ENCODE measurements at regions of chr12 and their contacts with region 1.

Region 1: DNA sequence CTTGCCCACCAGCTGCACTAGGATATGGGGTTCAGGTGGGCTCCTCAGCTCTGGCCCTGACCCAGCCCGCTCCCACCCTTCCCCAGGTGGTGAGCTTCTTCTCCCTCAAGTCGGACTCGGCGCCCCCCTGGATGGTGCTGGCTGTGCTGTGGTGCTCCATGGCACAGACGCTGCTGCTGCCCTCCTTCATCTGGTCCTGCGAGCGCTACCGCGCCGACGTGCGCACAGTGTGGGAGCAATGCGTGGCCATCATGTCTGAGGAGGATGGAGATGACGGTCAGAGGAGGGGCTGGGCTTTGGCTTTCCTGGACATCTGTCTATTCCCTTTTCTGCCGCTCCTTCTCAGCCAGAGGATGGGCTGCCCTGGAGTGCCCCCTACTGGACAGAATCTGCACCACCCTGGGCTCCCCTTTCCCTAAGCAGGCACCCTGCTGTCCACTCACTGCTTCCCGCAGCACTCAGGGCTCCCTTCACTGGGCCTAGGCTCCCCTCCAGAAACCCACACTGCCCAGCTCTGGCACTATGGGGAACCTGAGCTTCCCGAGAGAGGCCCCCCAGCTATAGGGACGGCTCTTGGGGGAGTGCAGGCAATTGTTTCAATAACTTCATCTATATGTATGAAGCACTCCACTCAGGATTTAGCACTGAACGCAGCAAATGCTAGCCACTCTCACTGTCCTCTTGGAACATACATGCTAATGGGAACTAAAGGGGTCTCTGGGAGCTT is 2.6 kb upstream of the P3H3 start:
- DNase-seq: peak; percentile 75 to 84 (median 81)
- ATAC-seq: peak; percentile 79
- H3K4me3 ChIP-seq: no peak overlapping the region
- H3K27ac ChIP-seq: no peak overlapping the region
- H3K4me1 ChIP-seq: peaks cover 19 to 58% of the 10 kb centered on the region in 2 experiments; a peak in 4 of 5 replicates
- H3K27me3 ChIP-seq: peaks cover 0 to 4% of the 10 kb centered on the region in 2 experiments; a peak in 2 of 5 replicates
- CTCF ChIP-seq: peak; percentile 89 to 91 (median 90)
- EP300 ChIP-seq: no peak; the same call in 1 of the 2 replicates
- POLR2A ChIP-seq: no peak
- RAD21 ChIP-seq: peak; percentile 72 to 81

Region 2: GRCh38 chr12:6613776-6614512 is 211.6 kb before region 1 on chr12:
- CTCF ChIA-PET with region 1: no interaction called
- POLR2A ChIA-PET with region 1: no interaction called
- in situ Hi-C with region 1: no loop called
- intact Hi-C with region 1: loop called (anchors 10 kb)
- DNase-seq: peak; percentile 82 to 95 (median 87)
- ATAC-seq: peak; percentile 89
- H3K4me3 ChIP-seq: no peak overlapping the region
- H3K27ac ChIP-seq: peak overlapping the region; percentile 85
- H3K4me1 ChIP-seq: peaks cover 29 to 43% of the 10 kb centered on the region in 2 experiments
- H3K27me3 ChIP-seq: no peaks in the 10 kb centered on the region
- CTCF ChIP-seq: peak; percentile 24 to 44 (median 27); a peak in 2 of 6 replicates
- EP300 ChIP-seq: no peak
- POLR2A ChIP-seq: peak; percentile 52
- RAD21 ChIP-seq: 0 out of 4 replicates have a peak, but pooled peaks have one; percentile 9 to 11

Region 3: DNA sequence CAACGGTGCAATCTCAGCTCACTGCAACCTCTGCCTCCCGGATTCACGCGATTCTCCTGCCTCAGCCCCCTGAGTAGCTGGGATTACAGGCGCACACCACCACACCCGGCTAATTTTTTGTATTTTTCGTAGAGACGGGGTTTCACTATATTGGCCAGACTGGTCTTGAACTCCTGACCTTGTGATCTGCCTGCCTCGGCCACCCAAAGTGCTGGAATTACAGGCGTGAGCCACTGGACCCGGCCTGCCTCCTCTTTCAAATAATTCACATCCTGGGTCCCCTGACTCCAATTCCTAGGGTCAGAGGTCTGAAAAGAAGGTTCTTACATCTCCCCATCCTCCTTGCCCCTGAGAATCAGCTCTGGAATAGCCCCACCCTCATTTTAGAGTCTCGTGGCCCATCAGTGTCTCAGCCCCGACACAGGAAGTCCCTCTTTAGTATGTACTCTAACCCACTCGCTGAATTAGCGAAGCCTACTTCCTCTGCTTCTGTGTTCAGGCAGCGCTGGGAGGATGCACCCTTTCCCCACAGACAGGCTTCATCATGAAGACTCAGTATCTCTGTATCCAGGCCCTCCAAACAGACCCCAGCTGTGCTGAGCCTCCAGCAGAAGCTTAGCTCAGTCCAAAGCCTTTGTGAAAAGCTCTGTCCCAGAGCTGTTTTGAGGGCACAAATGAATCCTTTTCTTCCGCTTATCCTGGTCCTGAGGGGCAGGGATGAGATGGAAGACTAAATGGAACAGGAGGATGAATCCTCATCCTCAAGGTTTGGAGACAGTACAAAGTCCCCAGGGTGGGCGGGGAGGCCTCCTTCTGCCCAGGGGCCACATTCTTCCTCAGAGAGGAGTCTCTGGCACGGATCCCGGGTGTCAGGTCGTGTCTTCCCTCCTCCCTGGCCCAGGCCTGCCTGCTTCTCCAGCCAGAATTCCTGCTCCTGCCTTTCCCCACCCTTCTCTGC is 193.3 kb before region 1 on chr12:
- CTCF ChIA-PET with region 1: no interaction called
- POLR2A ChIA-PET with region 1: no interaction called
- in situ Hi-C with region 1: no loop called
- intact Hi-C with region 1: no loop called
- DNase-seq: peak in 1 of 4 experiments; percentile 44
- ATAC-seq: no peak
- H3K4me3 ChIP-seq: no peak overlapping the region
- H3K27ac ChIP-seq: 0 out of 3 replicates have a peak overlapping the region, but pooled peaks have one; percentile 8
- H3K4me1 ChIP-seq: peaks cover 26 to 30% of the 10 kb centered on the region in 2 experiments; a peak in 4 of 5 replicates
- H3K27me3 ChIP-seq: no peaks in the 10 kb centered on the region
- CTCF ChIP-seq: no peak
- EP300 ChIP-seq: no peak
- POLR2A ChIP-seq: no peak
- RAD21 ChIP-seq: no peak

Region 4: GRCh38 chr12:6735448-6736191 is 89.9 kb before region 1 on chr12:
- CTCF ChIA-PET with region 1: interaction called, 6 read pairs
- POLR2A ChIA-PET with region 1: interaction called, 4 read pairs
- in situ Hi-C with region 1: no loop called
- intact Hi-C with region 1: loop called (anchors 1 kb)
- DNase-seq: peak; percentile 51 to 67 (median 53)
- ATAC-seq: peak; percentile 97
- H3K4me3 ChIP-seq: no peak overlapping the region
- H3K27ac ChIP-seq: no peak overlapping the region
- H3K4me1 ChIP-seq: peaks cover 0 to 2% of the 10 kb centered on the region in 2 experiments; a peak in 2 of 5 replicates
- H3K27me3 ChIP-seq: no peaks in the 10 kb centered on the region
- CTCF ChIP-seq: peak; percentile 70 to 76 (median 73)
- EP300 ChIP-seq: no peak
- POLR2A ChIP-seq: no peak
- RAD21 ChIP-seq: peak; percentile 54 to 75

Region 5: GRCh38 chr12:6778574-6779550 is 46.7 kb before region 1 on chr12:
- CTCF ChIA-PET with region 1: no interaction called
- POLR2A ChIA-PET with region 1: interaction called, 3 read pairs
- in situ Hi-C with region 1: no loop called
- intact Hi-C with region 1: loop called (anchors 5 kb)
- DNase-seq: peak; percentile 83 to 93 (median 86)
- ATAC-seq: peak; percentile 98
- H3K4me3 ChIP-seq: peak overlapping the region; percentile 41
- H3K27ac ChIP-seq: peak overlapping the region; percentile 39; the same call in 1 of the 3 replicates
- H3K4me1 ChIP-seq: peaks cover 5 to 21% of the 10 kb centered on the region in 2 experiments; a peak in 4 of 5 replicates
- H3K27me3 ChIP-seq: no peaks in the 10 kb centered on the region
- CTCF ChIP-seq: peak; percentile 87 to 89 (median 89)
- EP300 ChIP-seq: no peak
- POLR2A ChIP-seq: peak; percentile 35; the same call in 1 of the 2 replicates
- RAD21 ChIP-seq: peak; percentile 93 to 97

Region 6: GRCh38 chr12:6861391-6861790 is 35.8 kb after region 1 on chr12:
- CTCF ChIA-PET with region 1: no interaction called
- POLR2A ChIA-PET with region 1: no interaction called
- in situ Hi-C with region 1: no loop called
- intact Hi-C with region 1: no loop called
- DNase-seq: no peak
- ATAC-seq: no peak
- H3K4me3 ChIP-seq: no peak overlapping the region
- H3K27ac ChIP-seq: no peak overlapping the region
- H3K4me1 ChIP-seq: peaks cover 5 to 6% of the 10 kb centered on the region in 2 experiments; a peak in 4 of 5 replicates
- H3K27me3 ChIP-seq: no peaks in the 10 kb centered on the region
- CTCF ChIP-seq: no peak
- EP300 ChIP-seq: no peak
- POLR2A ChIP-seq: no peak
- RAD21 ChIP-seq: no peak

Region 7: DNA sequence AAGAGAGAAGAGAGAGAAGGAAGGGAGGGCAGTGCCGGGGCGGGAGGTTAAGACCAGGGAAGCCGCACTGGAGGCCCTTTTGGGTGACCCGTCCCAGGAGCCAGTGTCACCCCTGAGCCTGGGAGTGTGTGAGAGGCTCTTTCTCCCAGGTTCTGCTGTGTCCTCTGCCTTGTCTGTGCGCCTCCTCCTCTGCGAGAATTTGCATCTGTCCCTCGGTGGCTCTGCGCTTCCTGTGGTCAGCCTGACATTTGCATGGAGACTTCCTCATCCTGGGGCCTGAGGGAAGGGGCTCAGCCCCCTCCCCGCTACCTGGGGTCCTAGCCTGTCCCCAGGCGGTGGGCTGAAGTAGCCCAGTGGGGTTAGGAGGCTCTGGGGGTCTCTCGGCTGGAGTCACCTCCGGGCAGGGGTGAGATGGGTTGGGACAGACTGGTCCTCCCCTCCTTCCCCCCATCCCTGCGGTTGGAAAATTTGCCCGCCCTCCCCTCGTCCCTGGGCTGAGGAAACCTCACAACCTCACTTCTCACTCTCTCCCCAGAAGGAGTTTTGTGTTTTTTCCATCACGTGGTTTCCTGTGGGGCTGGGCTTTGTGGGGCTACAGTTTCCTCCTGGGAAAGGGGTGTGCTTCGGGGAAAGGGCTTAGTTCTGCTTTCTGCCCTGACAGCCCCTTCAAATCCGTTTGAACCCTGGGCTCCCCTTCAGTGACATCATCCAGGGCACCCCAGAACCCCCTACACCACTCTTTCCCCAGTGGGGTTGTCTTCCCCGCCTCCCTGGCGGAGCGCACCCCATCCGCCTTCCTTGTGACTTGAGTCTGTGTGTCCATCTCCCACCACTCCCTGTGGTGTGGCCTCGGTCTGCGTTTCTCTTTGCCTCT is 128.1 kb after region 1 on chr12:
- CTCF ChIA-PET with region 1: no interaction called
- POLR2A ChIA-PET with region 1: no interaction called
- in situ Hi-C with region 1: no loop called
- intact Hi-C with region 1: no loop called
- DNase-seq: no peak
- ATAC-seq: peak; percentile 46; the same call in 2 of the 3 replicates
- H3K4me3 ChIP-seq: no peak overlapping the region
- H3K27ac ChIP-seq: 0 out of 3 replicates have a peak overlapping the region, but pooled peaks have one; percentile 22
- H3K4me1 ChIP-seq: peaks cover 8 to 54% of the 10 kb centered on the region in 2 experiments
- H3K27me3 ChIP-seq: no peaks in the 10 kb centered on the region
- CTCF ChIP-seq: no peak
- EP300 ChIP-seq: no peak
- POLR2A ChIP-seq: no peak
- RAD21 ChIP-seq: no peak

Measured in K562 (cell line).